CD4-positive, alpha-beta memory T cell (primary cell): ENCODE measurements at regions of chr17 and their contacts with region 1.

Region 1: GRCh38 chr17:75749545-75750389 is 15.2 kb downstream of the GALK1 start:
- DNase-seq: peak; percentile 77 to 83 (median 78)
- H3K4me3 ChIP-seq: no peak overlapping the region
- H3K4me3 Mint-ChIP-seq: peak overlapping the region in 4 of 8 donors; percentile 31 to 49 (median 34)
- H3K27ac ChIP-seq: no peak overlapping the region
- H3K27ac Mint-ChIP-seq: peak overlapping the region in 3 of 7 donors; percentile 45 to 77 (median 65)
- H3K4me1 ChIP-seq: peaks cover 22% of the 10 kb centered on the region
- H3K4me1 Mint-ChIP-seq: peaks cover 10 to 30% (median 18%) of the 10 kb centered on the region in 4 donors
- H3K27me3 ChIP-seq: no peaks in the 10 kb centered on the region
- H3K27me3 Mint-ChIP-seq: peaks cover 0 to 3% of the 10 kb centered on the region in 2 donors

Region 2: GRCh38 chr17:75430159-75430974 is 319.4 kb before region 1 on chr17:
- CTCF ChIA-PET with region 1: interaction called, 13 read pairs
- POLR2A ChIA-PET with region 1: no interaction called
- intact Hi-C with region 1: loop called (anchors 1 kb)
- DNase-seq: no peak
- H3K4me3 ChIP-seq: no peak overlapping the region
- H3K4me3 Mint-ChIP-seq: no peak overlapping the region
- H3K27ac ChIP-seq: no peak overlapping the region
- H3K27ac Mint-ChIP-seq: peak overlapping the region in 1 of 7 donors; percentile 47
- H3K4me1 ChIP-seq: peaks cover 15% of the 10 kb centered on the region
- H3K4me1 Mint-ChIP-seq: peaks cover 10 to 20% (median 15%) of the 10 kb centered on the region in 4 donors
- H3K27me3 ChIP-seq: no peaks in the 10 kb centered on the region
- H3K27me3 Mint-ChIP-seq: peaks cover 0 to 9% of the 10 kb centered on the region in 2 donors

Region 3: GRCh38 chr17:75667021-75667790 is 82.6 kb before region 1 on chr17 and contains the starts of genes RECQL5 and SAP30BP:
- CTCF ChIA-PET with region 1: interaction called, 162 read pairs
- POLR2A ChIA-PET with region 1: interaction called, 5 read pairs
- intact Hi-C with region 1: no loop called
- DNase-seq: peak; percentile 94 to 98 (median 96)
- H3K4me3 ChIP-seq: peak within 1 kb of the TSS; percentile 72 to 85
- H3K4me3 Mint-ChIP-seq: peak within 1 kb of the TSS; percentile 21 to 74 (median 54)
- H3K27ac ChIP-seq: peak within 1 kb of the TSS; percentile 95
- H3K27ac Mint-ChIP-seq: peak within 1 kb of the TSS in 5 of 7 donors; percentile 29 to 72 (median 52)
- H3K4me1 ChIP-seq: peaks cover 25% of the 10 kb centered on the region
- H3K4me1 Mint-ChIP-seq: peaks cover 14 to 23% (median 18%) of the 10 kb centered on the region in 4 donors
- H3K27me3 ChIP-seq: no peaks in the 10 kb centered on the region
- H3K27me3 Mint-ChIP-seq: no peaks in the 10 kb centered on the region
- total RNA-seq, gene RECQL5: 58.3 to 59.1 TPM
- total RNA-seq, gene SAP30BP: 115 to 119 TPM

Region 4: GRCh38 chr17:75738218-75738802 is 11.5 kb before region 1 on chr17:
- CTCF ChIA-PET with region 1: interaction called, 13 read pairs
- POLR2A ChIA-PET with region 1: interaction called, 3 read pairs
- intact Hi-C with region 1: no loop called
- DNase-seq: no peak
- H3K4me3 ChIP-seq: no peak overlapping the region
- H3K4me3 Mint-ChIP-seq: no peak overlapping the region
- H3K27ac ChIP-seq: no peak overlapping the region
- H3K27ac Mint-ChIP-seq: no peak overlapping the region
- H3K4me1 ChIP-seq: no peaks in the 10 kb centered on the region
- H3K4me1 Mint-ChIP-seq: peaks cover 2 to 7% (median 4%) of the 10 kb centered on the region in 4 donors
- H3K27me3 ChIP-seq: no peaks in the 10 kb centered on the region
- H3K27me3 Mint-ChIP-seq: no peaks in the 10 kb centered on the region

Region 5: DNA sequence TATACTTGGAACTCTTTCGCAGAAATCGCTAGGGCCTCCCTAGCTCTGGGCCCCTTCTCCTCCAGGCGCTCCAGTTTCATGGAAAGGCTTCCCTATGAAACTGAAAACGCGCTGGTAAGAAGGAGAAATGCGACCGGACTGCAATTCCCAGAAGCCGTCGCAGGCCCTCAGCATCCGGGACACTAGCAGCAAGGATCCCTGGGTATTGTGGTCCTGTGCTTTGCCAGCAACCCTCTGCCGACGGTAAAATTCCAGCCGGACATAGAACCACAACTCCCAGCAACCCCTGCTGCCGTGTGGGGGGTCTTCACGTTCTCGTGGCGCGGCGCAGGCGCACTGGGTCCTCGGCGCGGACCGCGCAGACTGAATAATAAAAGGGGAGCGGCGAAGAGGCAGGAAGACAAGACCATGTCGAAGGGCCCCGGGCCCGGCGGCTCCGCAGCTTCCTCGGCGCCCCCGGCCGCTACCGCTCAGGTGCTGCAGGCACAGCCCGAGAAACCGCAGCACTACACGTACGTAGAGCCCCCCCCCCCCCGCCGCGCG is 34.8 kb after region 1 on chr17 and contains the start of gene UNK:
- CTCF ChIA-PET with region 1: interaction called, 19 read pairs
- POLR2A ChIA-PET with region 1: interaction called, 117 read pairs
- intact Hi-C with region 1: loop called (anchors 1 kb)
- DNase-seq: peak; percentile 97 to 98 (median 98)
- H3K4me3 ChIP-seq: peak within 1 kb of the TSS; percentile 66 to 83
- H3K4me3 Mint-ChIP-seq: peak within 1 kb of the TSS; percentile 88 to 97 (median 94)
- H3K27ac ChIP-seq: peak within 1 kb of the TSS; percentile 100
- H3K27ac Mint-ChIP-seq: peak within 1 kb of the TSS; percentile 95 to 100 (median 99)
- H3K4me1 ChIP-seq: peaks cover 51% of the 10 kb centered on the region
- H3K4me1 Mint-ChIP-seq: peaks cover 26 to 53% (median 42%) of the 10 kb centered on the region in 4 donors
- H3K27me3 ChIP-seq: no peaks in the 10 kb centered on the region
- H3K27me3 Mint-ChIP-seq: peaks cover under 1 to 2% of the 10 kb centered on the region in 2 donors
- total RNA-seq, gene UNK: 45.8 to 48.1 TPM

Region 6: GRCh38 chr17:75855310-75856081 is 105.7 kb after region 1 on chr17 and contains the start of gene WBP2:
- CTCF ChIA-PET with region 1: interaction called, 20 read pairs
- POLR2A ChIA-PET with region 1: interaction called, 19 read pairs
- intact Hi-C with region 1: no loop called
- DNase-seq: peak; percentile 96 to 100 (median 99)
- H3K4me3 ChIP-seq: peak within 1 kb of the TSS; percentile 60 to 67
- H3K4me3 Mint-ChIP-seq: peak within 1 kb of the TSS in 6 of 8 donors; percentile 83 to 92 (median 88)
- H3K27ac ChIP-seq: peak within 1 kb of the TSS; percentile 80
- H3K27ac Mint-ChIP-seq: peak within 1 kb of the TSS in 5 of 7 donors; percentile 92 to 95 (median 94)
- H3K4me1 ChIP-seq: peaks cover 37% of the 10 kb centered on the region
- H3K4me1 Mint-ChIP-seq: peaks cover 20 to 50% (median 26%) of the 10 kb centered on the region in 4 donors
- H3K27me3 ChIP-seq: no peaks in the 10 kb centered on the region
- H3K27me3 Mint-ChIP-seq: no peaks in the 10 kb centered on the region
- total RNA-seq, gene WBP2: 159 to 160 TPM